Activated CD4-positive, alpha-beta T cell treated with anti-CD3 and anti-CD28 coated beads, Interleukin-2, amount 10 ng/mL, durations not matched to agents 24 days and 14 days (primary cell): ENCODE measurements at regions of chr1 and their contacts with region 1.

Region 1: GRCh38 chr1:42335050-42335808 is at the start of gene FOXJ3:
- DNase-seq: peak; percentile 97
- H3K4me3 Mint-ChIP-seq: peak within 1 kb of the TSS; percentile 91
- H3K27ac Mint-ChIP-seq: peak within 1 kb of the TSS; percentile 89
- H3K4me1 Mint-ChIP-seq: peaks cover 34% of the 10 kb centered on the region
- H3K27me3 Mint-ChIP-seq: no peaks in the 10 kb centered on the region
- total RNA-seq, gene FOXJ3: 48.9 and 51.0 TPM in 2 replicates

Region 2: DNA sequence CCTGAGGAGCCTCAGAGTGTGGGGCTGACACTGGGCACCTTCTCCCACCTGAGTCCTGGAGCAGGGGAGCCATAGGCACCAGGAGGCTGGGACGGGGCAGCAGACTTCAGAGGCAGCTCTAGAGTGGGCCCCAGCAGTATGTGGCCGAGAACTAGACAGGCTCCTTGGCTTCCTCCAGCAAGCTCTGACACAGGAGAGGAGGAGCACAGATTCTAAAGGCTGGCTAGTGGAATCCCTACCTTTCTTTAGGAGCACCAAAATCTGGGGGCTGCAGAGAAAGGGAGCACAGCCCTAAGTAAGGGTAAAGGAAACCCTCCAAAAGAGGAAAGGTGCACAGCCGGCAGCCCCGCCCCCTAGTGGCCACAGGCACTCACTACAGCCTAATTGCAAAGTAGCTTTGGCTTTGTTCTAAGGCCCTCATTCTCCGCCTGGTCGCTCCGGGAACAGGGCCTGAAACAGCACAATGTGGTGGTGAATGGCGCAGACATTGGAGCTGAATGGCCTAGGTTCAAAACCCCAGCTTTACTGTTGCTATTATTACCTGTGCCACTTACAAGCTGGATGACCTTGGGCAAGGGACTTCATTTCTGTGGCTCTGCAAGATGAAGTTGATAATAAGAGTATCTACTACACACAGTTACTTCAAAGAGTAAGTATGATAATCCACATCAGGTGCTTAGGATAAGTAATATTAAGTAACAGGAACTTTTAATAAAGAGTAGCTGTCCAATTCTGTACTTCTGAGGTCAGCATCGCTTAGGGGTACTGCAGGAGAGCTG is 161.9 kb before region 1 on chr1:
- intact Hi-C with region 1: loop called (anchors 2 kb)
- DNase-seq: peak; percentile 89
- H3K4me3 Mint-ChIP-seq: no peak overlapping the region
- H3K27ac Mint-ChIP-seq: no peak overlapping the region
- H3K4me1 Mint-ChIP-seq: no peaks in the 10 kb centered on the region
- H3K27me3 Mint-ChIP-seq: no peaks in the 10 kb centered on the region

Region 3: GRCh38 chr1:42319871-42320484 is 15.3 kb before region 1 on chr1:
- intact Hi-C with region 1: loop called (anchors 2 kb)
- DNase-seq: peak; percentile 73
- H3K4me3 Mint-ChIP-seq: peak overlapping the region; percentile 78
- H3K27ac Mint-ChIP-seq: peak overlapping the region; percentile 86
- H3K4me1 Mint-ChIP-seq: peaks cover 59% of the 10 kb centered on the region
- H3K27me3 Mint-ChIP-seq: no peaks in the 10 kb centered on the region

Region 4: GRCh38 chr1:42380586-42381279 is 45.5 kb after region 1 on chr1 and contains the start of gene RIMKLA:
- intact Hi-C with region 1: loop called (anchors 2 kb)
- DNase-seq: peak; percentile 86
- H3K4me3 Mint-ChIP-seq: peak within 1 kb of the TSS; percentile 81
- H3K27ac Mint-ChIP-seq: peak within 1 kb of the TSS; percentile 48
- H3K4me1 Mint-ChIP-seq: peaks cover 8% of the 10 kb centered on the region
- H3K27me3 Mint-ChIP-seq: peaks cover 39% of the 10 kb centered on the region
- total RNA-seq, gene RIMKLA: 5.0 and 5.5 TPM in 2 replicates

Region 5: GRCh38 chr1:42456010-42456758 is 121.0 kb after region 1 on chr1 and contains the starts of genes PPCS and ZMYND12:
- intact Hi-C with region 1: loop called (anchors 1 kb)
- DNase-seq: peak; percentile 97
- H3K4me3 Mint-ChIP-seq: peak within 1 kb of the TSS; percentile 93
- H3K27ac Mint-ChIP-seq: peak within 1 kb of the TSS; percentile 98
- H3K4me1 Mint-ChIP-seq: peaks cover 23% of the 10 kb centered on the region
- H3K27me3 Mint-ChIP-seq: peaks cover 3% of the 10 kb centered on the region
- total RNA-seq, gene PPCS: 44.7 and 48.0 TPM in 2 replicates
- total RNA-seq, gene ZMYND12: 0.12 TPM in 1 of 2 replicates, not detected in the other

Region 6: DNA sequence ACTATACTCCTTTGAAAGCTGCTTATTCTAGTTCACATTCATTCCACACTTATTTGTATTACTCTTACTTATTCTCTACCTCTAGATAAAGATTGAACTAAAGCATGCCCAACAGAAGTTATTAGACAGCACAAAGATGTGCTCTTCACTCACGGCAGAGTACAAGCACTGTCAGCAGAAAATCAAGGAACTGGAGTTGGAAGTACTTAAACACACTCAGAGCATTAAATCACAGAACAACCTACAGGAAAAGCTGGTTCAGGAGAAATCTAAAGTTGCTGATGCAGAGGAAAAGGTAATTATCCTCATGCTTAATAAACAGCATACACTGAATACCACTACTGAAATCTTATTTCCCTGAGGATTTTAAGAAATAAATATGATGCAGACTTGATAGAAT is 241.7 kb after region 1 on chr1:
- intact Hi-C with region 1: loop called (anchors 10 kb)
- DNase-seq: no peak
- H3K4me3 Mint-ChIP-seq: no peak overlapping the region
- H3K27ac Mint-ChIP-seq: no peak overlapping the region
- H3K4me1 Mint-ChIP-seq: no peaks in the 10 kb centered on the region
- H3K27me3 Mint-ChIP-seq: peaks cover 2% of the 10 kb centered on the region

Region 7: GRCh38 chr1:42681741-42682483 is 346.7 kb after region 1 on chr1 and contains the start of gene YBX1:
- intact Hi-C with region 1: loop called (anchors 5 kb)
- DNase-seq: peak; percentile 98
- H3K4me3 Mint-ChIP-seq: peak within 1 kb of the TSS; percentile 94
- H3K27ac Mint-ChIP-seq: peak within 1 kb of the TSS; percentile 98
- H3K4me1 Mint-ChIP-seq: peaks cover 50% of the 10 kb centered on the region
- H3K27me3 Mint-ChIP-seq: no peaks in the 10 kb centered on the region
- total RNA-seq, gene YBX1: 861 and 867 TPM in 2 replicates